H1 (cell line): ENCODE measurements at regions of chr11 and their contacts with region 1.

Region 1: GRCh38 chr11:727859-728748 is 19.2 kb upstream of the TALDO1 start:
- DNase-seq: peak; percentile 66 to 98
- H3K4me3 ChIP-seq: no peak overlapping the region
- H3K27ac ChIP-seq: no peak overlapping the region
- H3K4me1 ChIP-seq: peaks cover 0 to 19% (median 12%) of the 10 kb centered on the region in 4 experiments; a peak in 5 of 7 replicates
- H3K27me3 ChIP-seq: peaks cover 0 to 2% (median 0%) of the 10 kb centered on the region in 4 experiments; a peak in 2 of 7 replicates
- CTCF ChIP-seq: peak in 2 of 3 experiments; percentile 98 to 100; a peak in 3 of 4 replicates
- EP300 ChIP-seq: no peak
- POLR2A ChIP-seq: no peak; a peak in 1 of 3 replicates
- RAD21 ChIP-seq: peak; percentile 82 to 92

Region 2: DNA sequence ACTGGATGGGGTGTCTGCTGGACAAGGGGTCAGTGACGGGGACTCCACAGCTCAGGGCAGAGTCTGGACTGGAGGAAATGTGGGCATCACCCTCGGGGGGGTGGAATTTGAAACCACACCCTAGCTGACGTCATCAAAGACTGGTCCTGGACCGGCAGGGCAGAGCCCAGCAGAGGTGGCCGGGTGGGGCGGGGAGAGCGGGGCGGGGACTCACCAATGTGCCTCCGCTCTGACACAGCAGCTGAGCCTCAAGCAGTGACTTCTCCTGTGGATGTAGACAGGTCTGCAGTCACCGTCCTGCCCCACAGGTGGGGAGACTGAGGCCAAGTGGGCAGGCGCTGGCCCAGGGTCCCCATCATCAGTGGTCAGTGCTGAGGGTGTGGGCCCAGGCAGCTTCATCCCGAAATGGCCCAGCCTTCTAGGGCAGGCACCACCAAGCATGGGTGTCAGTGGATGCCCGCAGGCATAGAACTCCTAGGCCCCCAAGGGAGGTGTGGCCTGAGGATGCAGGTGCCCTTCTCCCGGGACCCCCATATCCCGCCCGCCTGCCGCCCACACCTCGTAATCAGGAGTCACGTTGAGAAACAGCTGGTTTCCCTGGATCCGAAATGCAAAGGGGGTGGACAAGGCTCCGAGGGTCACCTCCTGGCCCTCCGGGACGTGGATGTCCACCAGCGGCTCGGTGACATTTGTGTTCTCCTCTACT is 104.0 kb before region 1 on chr11:
- CTCF ChIA-PET with region 1: no interaction called
- POLR2A ChIA-PET with region 1: no interaction called
- DNase-seq: no peak
- H3K4me3 ChIP-seq: no peak overlapping the region
- H3K27ac ChIP-seq: no peak overlapping the region
- H3K4me1 ChIP-seq: peaks cover 0 to 6% (median under 1%) of the 10 kb centered on the region in 4 experiments; a peak in 2 of 7 replicates
- H3K27me3 ChIP-seq: peaks cover 3 to 14% (median 10%) of the 10 kb centered on the region in 4 experiments; a peak in 6 of 7 replicates
- CTCF ChIP-seq: no peak
- EP300 ChIP-seq: no peak
- POLR2A ChIP-seq: no peak
- RAD21 ChIP-seq: no peak

Region 3: GRCh38 chr11:636452-637235 is 91.5 kb before region 1 on chr11:
- CTCF ChIA-PET with region 1: interaction called, 6 read pairs
- POLR2A ChIA-PET with region 1: interaction called, 15 read pairs
- DNase-seq: peak in 1 of 2 experiments; percentile 75
- H3K4me3 ChIP-seq: peak overlapping the region; percentile 34 to 60 (median 48)
- H3K27ac ChIP-seq: no peak overlapping the region
- H3K4me1 ChIP-seq: peaks cover 0 to 30% (median 20%) of the 10 kb centered on the region in 4 experiments; a peak in 6 of 7 replicates
- H3K27me3 ChIP-seq: peaks cover 21 to 49% (median 43%) of the 10 kb centered on the region in 4 experiments
- CTCF ChIP-seq: no peak
- EP300 ChIP-seq: no peak
- POLR2A ChIP-seq: no peak
- RAD21 ChIP-seq: no peak

Region 4: DNA sequence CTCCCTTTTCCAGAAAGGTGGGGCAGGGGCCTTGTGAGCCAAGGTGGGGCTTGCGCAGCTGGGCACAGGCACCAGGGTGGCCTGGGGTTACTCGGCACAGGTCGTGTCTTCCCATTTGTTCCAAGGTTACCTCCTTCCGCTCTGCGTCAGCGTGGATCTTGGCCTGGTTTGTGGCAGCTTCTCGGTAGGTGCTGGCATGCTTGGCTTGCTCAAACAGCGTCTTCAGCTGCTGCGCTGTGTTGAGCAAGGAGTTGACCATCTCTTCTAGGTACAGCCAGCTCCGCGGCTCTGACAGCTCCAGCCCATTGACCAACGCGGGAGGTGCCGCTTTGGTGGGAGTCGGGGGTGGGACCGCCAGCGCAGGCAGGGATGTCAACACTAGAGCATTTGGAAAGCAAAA is 53.7 kb before region 1 on chr11:
- CTCF ChIA-PET with region 1: interaction called, 10 read pairs
- POLR2A ChIA-PET with region 1: no interaction called
- DNase-seq: no peak
- H3K4me3 ChIP-seq: no peak overlapping the region
- H3K27ac ChIP-seq: no peak overlapping the region
- H3K4me1 ChIP-seq: no peaks in the 10 kb centered on the region
- H3K27me3 ChIP-seq: no peaks in the 10 kb centered on the region
- CTCF ChIP-seq: no peak
- EP300 ChIP-seq: no peak
- POLR2A ChIP-seq: no peak
- RAD21 ChIP-seq: no peak

Region 5: GRCh38 chr11:695538-696248 is 32.4 kb before region 1 on chr11 and contains the start of gene TMEM80:
- CTCF ChIA-PET with region 1: interaction called, 37 read pairs
- POLR2A ChIA-PET with region 1: interaction called, 15 read pairs
- DNase-seq: peak; percentile 91 to 99
- H3K4me3 ChIP-seq: peak within 1 kb of the TSS; percentile 62 to 92 (median 77)
- H3K27ac ChIP-seq: peak within 1 kb of the TSS; percentile 97
- H3K4me1 ChIP-seq: peaks cover 0 to 28% (median 11%) of the 10 kb centered on the region in 4 experiments; a peak in 6 of 7 replicates
- H3K27me3 ChIP-seq: no peaks in the 10 kb centered on the region
- CTCF ChIP-seq: 0 out of 4 replicates have a peak, but pooled peaks of 1 of the 3 experiments have one; percentile 0
- EP300 ChIP-seq: no peak
- POLR2A ChIP-seq: peak in 1 of 2 experiments; percentile 59; a peak in 1 of 3 replicates
- RAD21 ChIP-seq: no peak
- total RNA-seq, gene TMEM80: 7.3 and 8.0 TPM in 2 replicates

Region 6: DNA sequence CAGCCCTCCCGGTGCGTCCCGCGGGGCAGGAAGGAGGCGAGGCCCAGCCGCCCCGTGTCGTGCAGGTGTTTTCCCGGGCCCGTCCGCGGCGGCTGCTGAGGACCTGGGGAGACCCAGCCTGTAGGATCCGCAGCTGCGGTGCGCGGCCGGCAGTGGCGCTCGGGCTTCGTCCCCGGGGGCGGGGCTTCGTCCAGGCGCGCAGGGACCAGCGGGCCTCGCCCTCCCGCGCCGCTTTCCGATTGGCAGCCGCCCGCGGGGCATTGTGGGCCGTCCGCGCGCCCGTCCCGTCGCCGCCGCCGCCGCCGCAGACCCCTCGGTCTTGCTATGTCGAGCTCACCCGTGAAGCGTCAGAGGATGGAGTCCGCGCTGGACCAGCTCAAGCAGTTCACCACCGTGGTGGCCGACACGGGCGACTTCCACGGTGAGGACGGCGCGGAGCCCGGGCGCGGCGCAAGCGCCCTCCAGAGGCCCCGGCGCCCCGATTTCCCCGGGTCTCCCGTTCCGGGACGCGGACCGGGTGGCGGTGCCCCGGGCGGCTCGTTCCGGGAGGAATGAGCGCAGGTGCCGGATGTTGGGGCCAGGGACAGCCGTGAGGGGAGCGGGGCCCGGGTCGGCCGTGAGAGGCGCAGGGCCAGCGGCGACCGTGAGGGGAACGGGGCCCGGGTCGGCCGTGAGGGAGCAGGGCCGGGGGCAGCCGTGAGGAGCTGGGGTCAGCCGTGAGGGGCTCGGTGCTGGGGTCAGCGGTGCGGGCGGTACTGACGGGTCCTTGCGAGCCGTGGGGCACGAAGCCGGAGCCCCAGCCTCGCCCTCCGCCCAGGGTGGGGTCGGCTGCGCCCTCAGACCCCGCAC is 19.3 kb after region 1 on chr11 and contains the start of gene TALDO1:
- CTCF ChIA-PET with region 1: interaction called, 395 read pairs
- POLR2A ChIA-PET with region 1: interaction called, 216 read pairs
- DNase-seq: peak; percentile 71 to 96
- H3K4me3 ChIP-seq: peak within 1 kb of the TSS; percentile 72 to 91 (median 81)
- H3K27ac ChIP-seq: peak within 1 kb of the TSS; percentile 85
- H3K4me1 ChIP-seq: peaks cover 0 to 15% (median 4%) of the 10 kb centered on the region in 4 experiments; a peak in 5 of 7 replicates
- H3K27me3 ChIP-seq: no peaks in the 10 kb centered on the region
- CTCF ChIP-seq: peak in 1 of 3 experiments; percentile 19; a peak in 1 of 4 replicates
- EP300 ChIP-seq: 0 out of 3 replicates have a peak, but pooled peaks of 1 of the 2 experiments have one; percentile 45
- POLR2A ChIP-seq: peak; percentile 81 to 85
- RAD21 ChIP-seq: no peak
- total RNA-seq, gene TALDO1: 302 and 308 TPM in 2 replicates

Region 7: GRCh38 chr11:809287-810039 is 81.4 kb after region 1 on chr11 and contains the start of gene RPLP2:
- CTCF ChIA-PET with region 1: no interaction called
- POLR2A ChIA-PET with region 1: interaction called, 13 read pairs
- DNase-seq: peak; percentile 80 to 100
- H3K4me3 ChIP-seq: peak within 1 kb of the TSS; percentile 66 to 100 (median 90)
- H3K27ac ChIP-seq: peak within 1 kb of the TSS; percentile 99
- H3K4me1 ChIP-seq: peaks cover 0 to 10% (median 3%) of the 10 kb centered on the region in 4 experiments; a peak in 4 of 7 replicates
- H3K27me3 ChIP-seq: no peaks in the 10 kb centered on the region
- CTCF ChIP-seq: no peak
- EP300 ChIP-seq: no peak; a peak in 1 of 3 replicates
- POLR2A ChIP-seq: peak in 1 of 2 experiments; percentile 90; a peak in 2 of 3 replicates
- RAD21 ChIP-seq: no peak
- total RNA-seq, gene RPLP2: 2,084 and 2,106 TPM in 2 replicates